ENCODE measurements at regions of chr5 and their contacts with region 1.

Region 1: GRCh38 chr5:131382407-131383395 is 118.8 kb downstream of the CDC42SE2 start:
- DNase-seq: peak; percentile 85 to 94 (median 92)
- H3K4me3 ChIP-seq: peak overlapping the region in 1 of 7 experiments; percentile 41
- H3K27ac ChIP-seq: peak overlapping the region; percentile 99
- H3K4me1 ChIP-seq: peaks cover 44 to 71% (median 64%) of the 10 kb centered on the region in 4 experiments
- H3K27me3 ChIP-seq: no peaks in the 10 kb centered on the region

Region 2: GRCh38 chr5:131164191-131165118 is 218.2 kb before region 1 on chr5:
- CTCF ChIA-PET with region 1: interaction called, 19 read pairs
- POLR2A ChIA-PET with region 1: interaction called, 7 read pairs
- DNase-seq: peak; percentile 49 to 79 (median 65)
- H3K4me3 ChIP-seq: peak overlapping the region; percentile 85 to 98 (median 90)
- H3K27ac ChIP-seq: peak overlapping the region; percentile 95 to 98
- H3K4me1 ChIP-seq: peaks cover 18 to 43% (median 23%) of the 10 kb centered on the region in 4 experiments
- H3K27me3 ChIP-seq: no peaks in the 10 kb centered on the region

Region 3: DNA sequence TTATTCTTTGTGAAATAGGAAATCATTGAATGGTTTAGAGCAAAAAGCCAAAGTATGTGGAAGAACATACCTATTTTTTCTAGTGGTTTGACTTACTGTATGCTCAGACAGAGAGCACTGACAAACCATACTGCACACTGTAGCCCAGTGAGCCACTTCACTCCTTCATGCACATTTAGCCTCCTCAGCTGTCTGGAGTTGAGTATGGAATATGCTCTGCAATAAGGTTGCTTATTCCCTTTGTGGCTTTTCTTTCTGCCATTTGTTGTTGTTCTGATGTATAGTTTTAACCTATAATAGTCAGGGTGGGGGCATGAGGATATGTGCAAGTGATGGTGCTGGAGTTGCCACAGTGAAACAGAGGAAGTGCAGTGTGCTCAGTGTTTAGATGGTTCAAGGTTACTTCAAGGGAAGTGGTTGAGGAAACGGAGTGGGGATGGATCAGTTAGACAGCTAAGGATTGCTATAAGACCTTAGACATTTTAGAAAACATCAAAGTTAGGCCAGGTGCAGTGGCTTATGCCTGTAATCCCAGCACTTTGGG is 18.1 kb before region 1 on chr5:
- CTCF ChIA-PET with region 1: interaction called, 13 read pairs
- POLR2A ChIA-PET with region 1: interaction called, 4 read pairs
- DNase-seq: peak in 1 of 3 donors; percentile 46
- H3K4me3 ChIP-seq: no peak overlapping the region
- H3K27ac ChIP-seq: peak overlapping the region; percentile 6 to 11
- H3K4me1 ChIP-seq: peaks cover 3 to 8% (median 7%) of the 10 kb centered on the region in 4 experiments
- H3K27me3 ChIP-seq: no peaks in the 10 kb centered on the region

Region 4: DNA sequence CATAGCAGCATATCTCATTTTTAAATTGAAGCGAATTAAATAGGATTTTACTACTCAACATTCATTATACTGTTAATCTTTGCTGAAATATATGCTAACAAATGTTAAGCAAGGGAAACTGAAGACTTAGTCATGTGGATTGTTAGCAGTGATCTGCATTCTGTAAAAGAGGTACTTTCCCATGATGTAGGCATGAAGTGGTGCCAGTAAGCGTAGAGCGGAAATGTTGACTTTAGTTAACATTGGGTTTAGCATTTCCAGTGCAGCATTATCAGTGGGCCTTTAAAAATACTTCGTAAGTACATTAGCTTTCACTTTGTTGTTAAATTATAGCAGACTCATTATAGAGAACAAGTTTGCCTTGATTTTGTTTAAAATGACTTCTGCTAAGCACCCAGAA is 11.4 kb after region 1 on chr5:
- CTCF ChIA-PET with region 1: interaction called, 24 read pairs
- POLR2A ChIA-PET with region 1: no interaction called
- DNase-seq: peak in 2 of 3 donors; percentile 70
- H3K4me3 ChIP-seq: no peak overlapping the region
- H3K27ac ChIP-seq: peak overlapping the region in 1 of 2 experiments; percentile 46
- H3K4me1 ChIP-seq: peaks cover 4 to 18% (median 7%) of the 10 kb centered on the region in 4 experiments
- H3K27me3 ChIP-seq: no peaks in the 10 kb centered on the region

Measured in common myeloid progenitor, CD34-positive (primary cell).